Posterior vena cava (tissue), 2 donors: ENCODE measurements at regions of chr2 and their contacts with region 1.

Region 1: GRCh38 chr2:145256551-145256950 is 736.6 kb upstream of the ZEB2 start:
- DNase-seq: no peak

Region 2: GRCh38 chr2:145221032-145221431 is 35.5 kb before region 1 on chr2:
- intact Hi-C with region 1: loop called in 1 of 2 experiments (anchors 2 kb)
- DNase-seq: no peak

Region 3: DNA sequence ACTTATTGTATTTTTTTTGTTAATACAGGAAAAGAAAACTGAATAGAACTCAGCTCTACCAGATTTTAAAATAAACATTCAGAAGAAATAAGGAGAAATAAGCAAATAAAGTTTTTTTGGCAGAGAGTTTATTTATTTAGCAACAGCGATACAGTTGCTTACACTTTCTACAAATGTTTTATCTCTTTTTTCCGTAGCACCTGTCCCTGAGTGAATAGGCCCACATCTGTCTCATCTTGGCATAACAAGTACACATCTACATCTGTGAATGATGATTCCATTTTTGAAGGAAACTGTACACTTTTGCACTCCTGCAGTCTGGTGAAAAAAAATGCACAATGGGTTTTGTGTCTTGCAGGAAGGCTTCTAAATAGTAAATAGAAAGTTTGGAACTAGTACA is 47.0 kb after region 1 on chr2:
- intact Hi-C with region 1: no loop called
- DNase-seq: no peak

Region 4: DNA sequence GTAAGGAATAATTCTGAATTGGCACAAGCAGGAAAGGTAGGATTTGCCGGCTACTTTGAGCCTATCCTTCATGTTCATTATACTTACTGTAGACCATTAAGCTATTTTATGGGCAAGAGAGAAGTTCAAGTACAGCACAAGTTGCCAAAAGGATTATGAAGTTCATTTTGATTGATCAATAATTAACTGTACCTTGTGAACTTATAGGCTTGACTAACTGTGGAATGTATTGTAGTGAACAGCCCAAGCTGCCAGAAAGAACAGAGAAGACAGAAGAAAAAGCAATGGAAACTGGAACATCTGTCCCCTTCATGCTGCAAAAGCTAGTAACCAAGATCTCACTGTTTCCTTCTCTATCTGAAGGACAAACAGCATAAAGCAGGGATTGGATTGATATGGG is 73.4 kb after region 1 on chr2:
- intact Hi-C with region 1: no loop called
- DNase-seq: no peak

Region 5: DNA sequence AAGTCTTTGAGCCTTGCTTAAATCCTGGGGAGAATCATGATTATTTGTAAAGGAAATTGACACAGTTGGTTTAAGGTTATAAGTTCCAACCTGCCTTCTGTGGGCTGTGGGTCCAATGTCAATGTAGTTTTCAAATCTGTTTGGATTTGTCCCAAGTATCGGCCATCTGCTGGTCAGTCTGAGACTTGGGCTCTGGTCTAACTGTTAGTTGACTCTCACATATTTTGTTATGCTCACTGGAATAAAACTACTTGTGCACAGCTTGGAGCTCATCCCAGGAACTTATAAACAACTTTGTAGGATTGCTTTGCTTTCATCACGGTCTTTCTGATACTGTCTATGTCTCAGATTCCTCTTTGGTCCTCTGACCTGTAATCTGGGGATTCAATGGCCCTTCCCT is 289.5 kb after region 1 on chr2:
- intact Hi-C with region 1: no loop called
- DNase-seq: no peak